ENCODE measurements at regions of chr1 and their contacts with region 1.

Region 1: GRCh38 chr1:23184212-23184934 is 15.7 kb upstream of the LUZP1 start:
- DNase-seq: no peak
- H3K4me3 ChIP-seq: peak overlapping the region in 5 of 8 donors; percentile 11 to 60 (median 20)
- H3K27ac ChIP-seq: no peak overlapping the region
- H3K4me1 ChIP-seq: peaks cover 0 to 13% (median 8%) of the 10 kb centered on the region in 6 donors
- H3K27me3 ChIP-seq: no peaks in the 10 kb centered on the region
- CTCF ChIP-seq: peak; percentile 34 to 89 (median 68)
- POLR2A ChIP-seq: no peak

Region 2: DNA sequence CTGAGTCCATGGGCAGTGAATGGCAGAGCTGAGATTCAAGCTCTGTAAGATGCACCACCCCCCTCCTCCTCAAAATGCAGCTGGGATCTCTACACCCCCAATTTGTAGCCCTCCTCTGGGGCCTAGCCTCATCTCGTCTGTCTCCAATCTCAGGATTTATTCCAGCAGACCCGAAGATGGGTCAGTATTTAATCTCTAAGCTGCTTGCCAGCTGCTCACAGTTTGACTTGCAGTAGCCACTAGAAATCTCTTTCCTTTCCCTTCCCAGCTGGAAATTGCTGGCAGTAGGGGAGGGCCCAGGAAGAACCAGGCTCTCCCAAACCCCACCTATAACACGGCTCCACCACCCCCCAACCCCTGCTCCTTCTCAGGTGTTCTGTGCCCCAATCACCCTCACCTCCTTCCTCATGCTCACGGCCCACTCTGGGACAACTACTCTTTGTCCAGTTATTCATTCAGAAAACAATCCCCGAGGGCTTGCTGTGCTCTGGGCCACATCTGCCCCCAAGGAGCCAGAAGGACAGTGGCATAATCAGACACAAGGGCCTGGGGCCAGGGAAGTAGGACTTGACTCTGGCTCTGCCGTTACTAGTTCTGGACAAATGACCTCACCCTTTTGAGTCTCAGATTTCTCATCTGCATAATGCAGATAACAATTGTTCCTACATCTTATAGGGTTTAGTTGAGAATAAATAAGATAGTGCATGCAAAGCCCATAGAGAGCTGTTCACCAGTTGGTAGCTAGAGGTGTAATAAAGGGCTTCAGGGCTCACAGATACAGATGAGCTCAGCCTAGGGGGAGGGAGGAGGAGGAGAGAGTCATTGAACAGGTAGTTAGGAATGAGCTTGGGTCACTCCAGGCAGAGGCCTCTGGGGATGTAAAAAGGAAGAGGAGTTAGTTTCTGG is 213.0 kb before region 1 on chr1:
- intact Hi-C with region 1: loop called (anchors 5 kb)
- DNase-seq: peak; percentile 23
- H3K4me3 ChIP-seq: no peak overlapping the region
- H3K27ac ChIP-seq: no peak overlapping the region
- H3K4me1 ChIP-seq: peaks cover 0 to 10% (median 1%) of the 10 kb centered on the region in 6 donors
- H3K27me3 ChIP-seq: peaks cover 0 to 65% (median 9%) of the 10 kb centered on the region in 7 donors
- CTCF ChIP-seq: no peak
- POLR2A ChIP-seq: no peak

Region 3: DNA sequence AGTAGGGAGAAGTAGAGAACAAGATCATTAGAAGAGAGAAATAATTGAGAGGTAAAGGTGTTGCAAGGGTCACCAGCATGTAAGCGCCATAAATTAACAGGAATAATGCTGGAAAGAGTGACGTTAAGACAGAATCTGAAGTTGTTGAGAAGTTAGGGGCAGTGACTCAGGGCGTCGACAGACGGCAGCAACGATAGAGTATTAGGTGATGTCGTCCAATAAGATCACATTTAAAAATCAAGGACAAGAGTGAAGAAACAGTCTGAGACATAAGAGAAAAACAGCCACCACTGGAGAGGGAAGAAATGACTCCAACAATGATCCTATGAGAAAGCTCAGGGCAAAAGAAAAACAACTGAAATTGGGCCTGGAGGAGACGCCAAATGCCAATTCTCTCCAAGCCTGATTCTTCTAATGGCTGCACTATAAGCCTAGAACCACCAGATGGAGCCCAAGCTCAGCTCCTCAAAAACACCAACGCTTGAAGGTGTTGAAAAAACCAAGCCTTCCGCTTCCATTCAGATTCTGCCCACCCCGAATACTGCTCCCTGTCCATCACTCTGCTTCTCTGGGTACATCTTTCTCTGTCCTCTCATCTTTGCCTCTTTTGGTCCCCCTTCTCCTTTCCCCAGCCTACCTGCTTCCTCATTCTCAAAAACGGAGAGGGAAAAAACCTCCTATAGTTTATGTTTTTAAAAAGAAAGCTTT is 85.8 kb before region 1 on chr1:
- intact Hi-C with region 1: loop called (anchors 2 kb)
- DNase-seq: no peak
- H3K4me3 ChIP-seq: no peak overlapping the region
- H3K27ac ChIP-seq: peak overlapping the region in 1 of 8 donors; percentile 75
- H3K4me1 ChIP-seq: peaks cover 40 to 59% (median 53%) of the 10 kb centered on the region in 6 donors
- H3K27me3 ChIP-seq: no peaks in the 10 kb centered on the region
- CTCF ChIP-seq: peak; percentile 84 to 97 (median 90)
- POLR2A ChIP-seq: no peak

Region 4: DNA sequence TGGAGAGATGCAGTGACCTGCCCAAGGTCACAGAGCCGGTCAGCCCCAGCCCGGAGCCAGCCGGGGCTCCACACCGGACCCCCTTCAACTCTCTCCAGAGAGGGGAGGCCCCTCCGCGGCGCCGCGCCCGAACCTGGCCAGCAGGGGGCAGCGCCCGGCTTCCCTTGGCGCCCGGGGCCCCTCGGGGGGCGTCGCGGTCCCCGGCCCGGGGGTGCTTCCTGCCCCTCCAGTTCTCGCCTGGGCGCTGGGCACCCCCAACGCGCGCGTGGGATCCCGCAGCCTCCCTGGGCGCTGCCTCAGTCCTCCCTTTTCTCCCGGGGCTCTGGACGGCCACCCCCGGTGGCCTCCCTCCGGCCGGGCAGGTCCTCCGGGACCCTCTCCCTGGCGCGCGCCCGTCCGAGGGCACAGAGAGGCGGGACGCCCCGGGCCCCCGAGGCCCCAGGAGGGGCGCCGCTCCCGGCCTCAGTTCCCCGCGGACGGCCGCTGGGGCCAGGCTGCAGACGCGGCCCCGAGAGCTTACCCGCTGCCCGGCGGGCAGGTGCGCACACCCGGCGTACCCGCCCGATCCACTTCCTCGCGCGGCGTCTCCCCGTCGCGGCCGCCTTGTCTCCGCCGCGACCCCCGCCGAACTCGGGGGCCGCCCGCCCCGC is 32.5 kb after region 1 on chr1:
- intact Hi-C with region 1: no loop called
- DNase-seq: peak; percentile 76
- H3K4me3 ChIP-seq: peak overlapping the region; percentile 20 to 69 (median 42)
- H3K27ac ChIP-seq: no peak overlapping the region
- H3K4me1 ChIP-seq: peaks cover 5 to 21% (median 14%) of the 10 kb centered on the region in 6 donors
- H3K27me3 ChIP-seq: peaks cover 6 to 80% (median 43%) of the 10 kb centered on the region in 7 donors
- CTCF ChIP-seq: peak in 10 of 11 experiments; percentile 9 to 77 (median 60)
- POLR2A ChIP-seq: no peak

Region 5: DNA sequence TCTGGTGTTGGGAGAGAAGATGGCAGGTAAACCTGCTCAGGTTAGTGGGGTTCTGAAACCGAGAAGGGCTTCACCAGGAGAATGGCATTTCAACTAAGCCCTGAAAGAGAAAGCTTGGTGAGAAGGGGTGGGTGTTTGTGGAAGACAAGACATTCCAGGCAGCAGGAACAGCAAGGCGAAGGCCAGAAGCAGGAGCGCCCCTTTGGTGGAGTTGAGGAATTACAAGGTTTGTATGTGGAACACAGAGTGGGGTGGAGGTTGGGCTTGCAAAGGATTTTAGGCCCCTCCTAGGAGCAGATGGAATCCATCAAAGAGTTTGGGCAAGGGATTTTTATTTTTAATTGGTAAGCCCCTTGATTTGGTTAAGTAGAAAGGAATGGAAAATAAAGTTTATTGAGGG is 534.1 kb after region 1 on chr1:
- intact Hi-C with region 1: no loop called
- DNase-seq: peak; percentile 30
- H3K4me3 ChIP-seq: no peak overlapping the region
- H3K27ac ChIP-seq: no peak overlapping the region
- H3K4me1 ChIP-seq: peaks cover 0 to 33% (median 8%) of the 10 kb centered on the region in 6 donors
- H3K27me3 ChIP-seq: no peaks in the 10 kb centered on the region
- CTCF ChIP-seq: peak in 3 of 11 experiments; percentile 15 to 42 (median 24)
- POLR2A ChIP-seq: no peak

Measured in spleen (tissue), 13 donors.